ENCODE measurements at regions of chrX and their contacts with region 1.

Region 1: GRCh38 chrX:21940356-21940829 is at the start of gene SMS:
- DNase-seq: peak; percentile 78
- H3K4me3 ChIP-seq: peak within 1 kb of the TSS; percentile 44 to 61 (median 55)
- H3K27ac ChIP-seq: peak within 1 kb of the TSS; percentile 59
- H3K4me1 ChIP-seq: peaks cover 31% of the 10 kb centered on the region
- H3K27me3 ChIP-seq: no peaks in the 10 kb centered on the region
- CTCF ChIP-seq: no peak
- total RNA-seq, gene SMS: 63.3 to 128 TPM

Region 2: DNA sequence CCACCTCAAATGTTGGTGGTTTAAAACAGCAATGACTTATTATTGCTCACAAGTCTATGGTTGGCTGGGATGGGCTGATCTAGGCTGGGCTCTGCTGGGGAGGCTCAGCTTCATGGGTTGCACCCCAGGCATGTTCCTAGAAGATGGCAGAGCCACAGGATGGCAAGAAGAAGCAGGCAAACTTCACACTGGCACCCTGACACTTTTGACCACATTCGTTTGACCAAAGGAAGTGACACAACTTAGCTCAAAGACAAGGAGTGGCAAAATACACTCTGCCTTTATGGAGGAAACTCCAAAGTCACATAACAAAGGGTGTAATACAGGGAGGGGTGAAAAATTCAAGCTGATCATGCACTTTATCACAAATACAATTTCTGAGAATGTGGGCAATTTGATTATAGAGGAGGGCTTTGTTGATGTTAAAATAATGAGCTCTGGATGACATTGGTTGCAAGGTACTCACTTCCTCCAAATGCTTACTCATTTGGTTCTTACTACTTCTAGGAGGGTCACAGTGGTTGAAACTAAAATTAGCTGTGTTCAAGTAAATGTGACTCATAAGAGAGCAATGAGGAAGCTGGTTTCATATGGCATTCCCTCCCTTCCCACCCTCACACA is 1424.4 kb before region 1 on chrX:
- CTCF ChIA-PET with region 1: no interaction called
- dilution Hi-C with region 1: no loop called
- in situ Hi-C with region 1: loop called in 1 of 2 experiments (anchors 25 kb)
- intact Hi-C with region 1: no loop called
- DNase-seq: peak; percentile 89
- H3K4me3 ChIP-seq: no peak overlapping the region
- H3K27ac ChIP-seq: peak overlapping the region; percentile 79
- H3K4me1 ChIP-seq: peaks cover 32% of the 10 kb centered on the region
- H3K27me3 ChIP-seq: no peaks in the 10 kb centered on the region
- CTCF ChIP-seq: no peak

Region 3: GRCh38 chrX:21479695-21480270 is 460.6 kb before region 1 on chrX:
- CTCF ChIA-PET with region 1: no interaction called
- dilution Hi-C with region 1: no loop called
- in situ Hi-C with region 1: no loop called
- intact Hi-C with region 1: no loop called
- DNase-seq: peak; percentile 30
- H3K4me3 ChIP-seq: no peak overlapping the region
- H3K27ac ChIP-seq: no peak overlapping the region
- H3K4me1 ChIP-seq: no peaks in the 10 kb centered on the region
- H3K27me3 ChIP-seq: no peaks in the 10 kb centered on the region
- CTCF ChIP-seq: peak; percentile 69 to 78

Region 4: GRCh38 chrX:21839334-21840192 is 100.8 kb before region 1 on chrX and contains the start of gene MBTPS2:
- CTCF ChIA-PET with region 1: interaction called, 4 read pairs
- dilution Hi-C with region 1: no loop called
- in situ Hi-C with region 1: no loop called
- intact Hi-C with region 1: loop called (anchors 1 kb)
- DNase-seq: peak; percentile 79
- H3K4me3 ChIP-seq: peak within 1 kb of the TSS; percentile 49 to 76 (median 72)
- H3K27ac ChIP-seq: peak within 1 kb of the TSS; percentile 61
- H3K4me1 ChIP-seq: no peaks in the 10 kb centered on the region
- H3K27me3 ChIP-seq: peaks cover 2% of the 10 kb centered on the region
- CTCF ChIP-seq: peak in 1 of 2 donors; percentile 14
- total RNA-seq, gene MBTPS2: 6.8 to 18.5 TPM

Region 5: DNA sequence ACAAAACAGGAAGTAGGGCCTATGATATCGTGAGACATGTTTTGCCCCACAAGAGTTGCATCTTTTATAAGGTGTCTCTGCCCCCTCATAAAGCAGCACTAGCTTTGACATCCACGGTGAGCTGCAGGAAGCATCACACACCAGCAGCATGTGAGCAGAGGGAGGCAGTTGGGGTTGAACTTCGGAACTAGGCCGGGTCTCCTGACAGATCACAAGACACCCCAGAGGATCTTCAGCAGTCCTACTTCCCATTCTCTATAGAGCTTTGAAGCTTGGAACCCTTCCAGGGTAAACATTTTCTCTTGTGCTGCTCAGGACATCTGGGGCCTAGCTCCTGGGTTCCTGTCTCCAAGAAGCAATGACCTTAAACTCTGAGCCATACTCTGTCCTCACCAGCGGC is 57.1 kb before region 1 on chrX:
- CTCF ChIA-PET with region 1: no interaction called
- dilution Hi-C with region 1: no loop called
- in situ Hi-C with region 1: no loop called
- intact Hi-C with region 1: no loop called
- DNase-seq: no peak
- H3K4me3 ChIP-seq: no peak overlapping the region
- H3K27ac ChIP-seq: no peak overlapping the region
- H3K4me1 ChIP-seq: no peaks in the 10 kb centered on the region
- H3K27me3 ChIP-seq: no peaks in the 10 kb centered on the region
- CTCF ChIP-seq: no peak

Region 6: DNA sequence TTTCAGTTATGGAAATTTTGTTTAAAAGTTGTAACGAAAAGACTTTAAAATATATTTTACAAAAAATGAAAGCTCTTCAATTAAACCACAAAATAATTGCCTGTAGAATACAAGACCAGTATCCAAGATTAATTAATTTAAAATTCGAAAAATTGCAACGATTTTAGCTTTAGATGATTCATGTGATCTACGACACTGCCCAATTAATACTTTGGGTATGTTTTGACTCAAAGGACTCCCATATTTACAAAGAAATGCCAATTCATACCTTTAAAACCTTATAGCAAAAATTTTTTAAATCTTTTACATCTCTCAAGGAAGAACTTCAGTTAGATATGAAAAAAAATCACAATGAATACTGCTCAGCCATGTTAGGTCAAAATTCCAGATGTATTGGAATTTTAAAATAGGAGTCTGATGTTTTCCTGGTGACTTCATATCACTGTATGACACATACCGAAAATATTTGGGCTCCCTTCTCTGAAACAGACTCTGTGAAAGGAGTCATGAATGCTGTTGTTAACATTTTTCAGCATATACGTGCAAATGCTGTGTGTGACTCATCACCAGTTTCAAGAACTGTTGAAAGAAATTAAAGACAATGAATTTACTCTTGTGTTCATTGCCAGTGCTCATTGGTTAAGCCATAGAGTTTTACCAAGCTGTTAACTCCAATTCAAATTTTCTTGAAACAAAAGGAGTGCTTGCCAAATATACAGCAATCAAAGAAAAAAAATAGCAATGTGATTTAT is 13.7 kb before region 1 on chrX:
- CTCF ChIA-PET with region 1: no interaction called
- dilution Hi-C with region 1: no loop called
- in situ Hi-C with region 1: no loop called
- intact Hi-C with region 1: loop called (anchors 2 kb)
- DNase-seq: peak; percentile 95
- H3K4me3 ChIP-seq: no peak overlapping the region
- H3K27ac ChIP-seq: peak overlapping the region; percentile 87
- H3K4me1 ChIP-seq: peaks cover 13% of the 10 kb centered on the region
- H3K27me3 ChIP-seq: no peaks in the 10 kb centered on the region
- CTCF ChIP-seq: no peak